ENCODE measurements at regions of chr20 and their contacts with region 1.

Region 1: GRCh38 chr20:10673988-10674711 is at the start of gene JAG1:
- DNase-seq: peak; percentile 85
- ATAC-seq: peak; percentile 78
- H3K4me3 ChIP-seq: peak within 1 kb of the TSS; percentile 75 to 90
- H3K27ac ChIP-seq: peak within 1 kb of the TSS; percentile 99
- H3K4me1 ChIP-seq: peaks cover 13 to 26% of the 10 kb centered on the region in 2 experiments
- H3K27me3 ChIP-seq: no peaks in the 10 kb centered on the region
- CTCF ChIP-seq: no peak
- POLR2A ChIP-seq: peak; percentile 9
- RAD21 ChIP-seq: no peak
- total RNA-seq, gene JAG1: 31.9 TPM

Region 2: DNA sequence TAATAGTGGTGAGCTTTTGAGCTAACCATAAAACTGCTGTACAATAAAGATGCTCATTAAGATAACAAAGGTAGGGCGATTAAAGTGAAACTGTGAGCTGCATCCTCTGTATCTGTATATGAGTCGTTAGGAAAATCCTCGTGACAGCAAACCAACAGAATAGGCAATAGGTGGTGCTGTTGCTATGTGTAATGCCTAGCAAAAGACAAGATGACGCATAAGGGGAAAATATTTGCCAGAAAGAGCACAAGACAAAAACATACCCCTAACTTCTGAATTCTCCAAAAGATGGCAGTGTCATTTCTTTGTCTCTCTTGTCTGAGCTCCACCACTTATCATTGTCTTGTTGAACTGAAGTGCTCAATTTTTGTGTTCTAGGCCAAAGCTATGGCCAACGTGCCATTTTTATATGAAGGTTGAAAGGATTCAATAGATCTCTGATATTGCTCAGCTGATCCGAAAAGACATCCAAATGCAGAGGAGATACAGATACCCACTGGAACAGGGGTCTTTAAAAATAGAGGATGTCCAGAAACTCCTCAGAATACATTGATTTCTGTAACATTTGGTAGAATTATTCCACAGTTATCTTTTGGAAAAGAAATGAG is 695.6 kb before region 1 on chr20:
- CTCF ChIA-PET with region 1: no interaction called
- POLR2A ChIA-PET with region 1: no interaction called
- RAD21 ChIA-PET with region 1: no interaction called
- intact Hi-C with region 1: loop called (anchors 5 kb)
- DNase-seq: peak; percentile 79
- ATAC-seq: peak; percentile 76
- H3K4me3 ChIP-seq: peak overlapping the region; percentile 8 to 23; a peak in 2 of 4 replicates
- H3K27ac ChIP-seq: peak overlapping the region; percentile 46; the same call in 1 of the 2 replicates
- H3K4me1 ChIP-seq: peaks cover 17 to 19% of the 10 kb centered on the region in 2 experiments; a peak in 2 of 4 replicates
- H3K27me3 ChIP-seq: no peaks in the 10 kb centered on the region
- CTCF ChIP-seq: peak; percentile 59 to 91 (median 82)
- POLR2A ChIP-seq: no peak
- RAD21 ChIP-seq: peak; percentile 95

Region 3: GRCh38 chr20:10553326-10553984 is 120.7 kb before region 1 on chr20:
- CTCF ChIA-PET with region 1: interaction called, 3 read pairs
- POLR2A ChIA-PET with region 1: no interaction called
- RAD21 ChIA-PET with region 1: no interaction called
- intact Hi-C with region 1: loop called (anchors 5 kb)
- DNase-seq: no peak
- ATAC-seq: peak; percentile 84
- H3K4me3 ChIP-seq: no peak overlapping the region
- H3K27ac ChIP-seq: no peak overlapping the region
- H3K4me1 ChIP-seq: peaks cover 56 to 60% of the 10 kb centered on the region in 2 experiments
- H3K27me3 ChIP-seq: no peaks in the 10 kb centered on the region
- CTCF ChIP-seq: peak; percentile 60 to 88 (median 80); a peak in 5 of 6 replicates
- POLR2A ChIP-seq: no peak
- RAD21 ChIP-seq: peak; percentile 90

Region 4: DNA sequence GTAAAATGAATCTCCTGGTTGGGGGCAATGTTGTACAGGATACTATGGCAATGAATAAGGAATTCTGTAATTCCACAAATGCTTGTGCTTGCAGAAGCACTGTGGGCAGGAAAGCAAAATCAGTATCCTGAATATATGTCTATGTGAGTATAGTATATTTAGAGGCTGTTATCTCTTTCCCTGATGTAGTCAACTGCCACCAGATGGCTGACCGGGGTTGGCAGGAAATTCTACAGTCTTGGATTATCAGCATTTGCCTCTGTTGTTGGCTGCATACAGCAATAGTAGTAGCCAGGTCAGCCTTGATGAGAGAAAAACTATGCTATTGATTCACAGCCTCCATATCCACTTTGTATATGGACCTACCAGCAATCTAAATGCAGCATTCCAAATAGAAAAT is 424.7 kb after region 1 on chr20:
- CTCF ChIA-PET with region 1: no interaction called
- POLR2A ChIA-PET with region 1: no interaction called
- RAD21 ChIA-PET with region 1: no interaction called
- intact Hi-C with region 1: loop called (anchors 1 kb)
- DNase-seq: peak; percentile 8
- ATAC-seq: peak; percentile 70
- H3K4me3 ChIP-seq: no peak overlapping the region
- H3K27ac ChIP-seq: no peak overlapping the region
- H3K4me1 ChIP-seq: no peaks in the 10 kb centered on the region
- H3K27me3 ChIP-seq: no peaks in the 10 kb centered on the region
- CTCF ChIP-seq: peak; percentile 31 to 54 (median 43); a peak in 5 of 6 replicates
- POLR2A ChIP-seq: no peak
- RAD21 ChIP-seq: peak; percentile 70

Region 5: DNA sequence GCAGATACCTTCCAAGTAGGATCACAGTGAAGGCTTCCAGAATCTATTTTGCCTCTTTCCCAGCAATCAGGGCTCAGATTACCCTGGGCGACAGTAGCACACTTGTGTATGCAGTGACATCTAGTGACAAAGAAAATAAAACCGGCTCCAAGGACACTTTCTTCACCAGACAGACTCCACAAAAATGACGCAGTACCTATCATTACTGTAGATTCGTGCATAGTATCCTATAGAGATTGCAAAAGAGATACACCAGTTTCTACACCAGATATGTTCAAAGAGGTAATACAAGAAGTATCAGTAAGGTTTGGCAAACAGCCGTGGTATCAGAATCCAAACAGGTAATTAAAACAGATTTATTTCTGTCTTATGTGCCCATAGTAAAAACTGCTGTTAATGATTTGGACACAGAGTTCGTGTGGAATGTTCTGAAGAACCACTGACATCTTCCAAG is 600.0 kb after region 1 on chr20:
- CTCF ChIA-PET with region 1: no interaction called
- POLR2A ChIA-PET with region 1: interaction called, 3 read pairs
- RAD21 ChIA-PET with region 1: interaction called in 1 of 2 experiments, 3 read pairs
- intact Hi-C with region 1: loop called (anchors 2 kb)
- DNase-seq: peak; percentile 52
- ATAC-seq: peak; percentile 94
- H3K4me3 ChIP-seq: no peak overlapping the region
- H3K27ac ChIP-seq: no peak overlapping the region
- H3K4me1 ChIP-seq: peaks cover 11 to 19% of the 10 kb centered on the region in 2 experiments; a peak in 2 of 4 replicates
- H3K27me3 ChIP-seq: no peaks in the 10 kb centered on the region
- CTCF ChIP-seq: peak; percentile 51 to 78 (median 62); a peak in 5 of 6 replicates
- POLR2A ChIP-seq: no peak
- RAD21 ChIP-seq: peak; percentile 93